CD4-positive, alpha-beta T cell (primary cell): ENCODE measurements at regions of chr3 and their contacts with region 1.

Region 1: DNA sequence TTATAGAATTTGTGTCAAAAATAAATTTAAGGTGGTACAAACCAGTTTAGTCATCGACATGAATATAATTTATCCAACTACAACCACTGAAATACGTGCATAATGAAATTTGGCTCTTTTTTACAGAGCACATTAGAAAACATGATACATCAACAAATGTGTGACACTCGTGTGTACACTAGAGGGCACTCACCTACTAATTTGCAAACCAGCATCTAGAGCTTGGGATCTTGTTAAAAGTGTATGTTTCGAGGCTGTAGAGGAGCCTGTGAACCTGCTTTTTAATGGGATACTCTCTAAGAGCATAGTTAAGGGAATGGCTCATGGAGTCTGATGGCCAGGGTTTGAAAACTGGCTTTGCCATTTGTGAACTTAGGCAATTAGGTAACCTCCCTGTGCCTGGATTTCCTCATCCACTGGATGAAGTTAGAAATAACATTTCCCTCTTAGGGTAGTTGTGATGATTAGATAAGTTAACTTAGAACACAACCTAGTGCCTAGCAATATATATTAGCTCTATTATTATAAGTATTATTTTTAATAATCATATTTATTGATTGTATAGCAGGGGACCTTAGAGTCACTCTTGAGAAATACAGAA is 8.8 kb upstream of the CPOX start:
- DNase-seq: peak in 4 of 14 experiments; percentile 13 to 56 (median 42)
- ATAC-seq: peak; percentile 79
- H3K4me3 ChIP-seq: no peak overlapping the region
- H3K4me3 Mint-ChIP-seq: no peak overlapping the region
- H3K27ac ChIP-seq: no peak overlapping the region
- H3K27ac Mint-ChIP-seq: no peak overlapping the region
- H3K4me1 ChIP-seq: no peaks in the 10 kb centered on the region
- H3K4me1 Mint-ChIP-seq: no peaks in the 10 kb centered on the region
- H3K27me3 ChIP-seq: no peaks in the 10 kb centered on the region
- H3K27me3 Mint-ChIP-seq: peaks cover 13% of the 10 kb centered on the region
- CTCF ChIP-seq: peak; percentile 74

Region 2: DNA sequence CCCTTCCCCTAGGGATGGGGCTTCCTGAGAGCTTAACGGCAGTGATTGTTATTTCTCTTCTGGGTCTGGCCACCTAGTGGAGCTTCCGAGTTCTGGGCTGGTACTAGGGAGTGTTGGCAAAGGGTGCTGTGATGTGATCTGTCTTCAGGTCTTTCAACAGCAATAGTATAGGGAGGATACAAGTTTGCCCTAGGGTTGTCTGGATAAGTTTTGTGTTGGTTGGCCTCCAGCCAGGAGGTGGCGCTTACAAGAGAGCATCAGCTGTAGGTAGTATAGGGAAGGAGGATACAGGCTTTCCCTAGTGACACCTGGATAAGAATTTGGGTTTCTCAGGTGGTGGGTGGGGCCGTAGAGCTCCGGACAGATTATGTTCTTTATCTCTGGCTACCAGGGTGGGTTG is 10.4 kb after region 1 on chr3:
- CTCF ChIA-PET with region 1: interaction called, 12 read pairs
- POLR2A ChIA-PET with region 1: no interaction called
- intact Hi-C with region 1: no loop called
- DNase-seq: peak in 1 of 14 experiments; percentile 10
- ATAC-seq: no peak
- H3K4me3 ChIP-seq: no peak overlapping the region
- H3K4me3 Mint-ChIP-seq: no peak overlapping the region
- H3K27ac ChIP-seq: no peak overlapping the region
- H3K27ac Mint-ChIP-seq: no peak overlapping the region
- H3K4me1 ChIP-seq: no peaks in the 10 kb centered on the region
- H3K4me1 Mint-ChIP-seq: no peaks in the 10 kb centered on the region
- H3K27me3 ChIP-seq: no peaks in the 10 kb centered on the region
- H3K27me3 Mint-ChIP-seq: no peaks in the 10 kb centered on the region
- CTCF ChIP-seq: no peak

Region 3: DNA sequence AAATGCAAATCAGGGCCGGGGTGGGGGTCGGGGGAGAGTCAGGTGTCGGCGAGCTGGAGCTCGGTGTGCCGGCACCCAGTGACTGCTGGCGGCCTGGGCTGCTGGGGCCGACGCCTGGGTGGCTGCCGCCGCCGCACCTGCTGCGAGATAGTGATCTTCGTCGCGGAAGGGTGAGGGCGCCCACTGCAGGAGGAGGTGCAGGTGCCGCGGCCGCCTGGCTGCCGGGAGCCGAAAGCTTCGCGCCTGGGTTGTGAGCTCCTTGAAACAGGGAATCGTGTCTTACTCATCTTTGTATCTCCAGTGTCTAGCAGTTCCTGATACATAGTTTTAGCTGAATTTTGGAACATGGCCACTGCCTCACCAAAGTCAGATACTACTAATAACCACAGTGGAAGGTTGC is 55.3 kb after region 1 on chr3:
- CTCF ChIA-PET with region 1: interaction called, 4 read pairs
- POLR2A ChIA-PET with region 1: no interaction called
- intact Hi-C with region 1: loop called (anchors 5 kb)
- DNase-seq: peak in 12 of 14 experiments; percentile 1 to 63 (median 30)
- ATAC-seq: peak; percentile 81
- H3K4me3 ChIP-seq: no peak overlapping the region
- H3K4me3 Mint-ChIP-seq: no peak overlapping the region
- H3K27ac ChIP-seq: no peak overlapping the region
- H3K27ac Mint-ChIP-seq: no peak overlapping the region
- H3K4me1 ChIP-seq: peaks cover 4% of the 10 kb centered on the region
- H3K4me1 Mint-ChIP-seq: peaks cover 13% of the 10 kb centered on the region
- H3K27me3 ChIP-seq: peaks cover 0 to 4% of the 10 kb centered on the region in 2 experiments
- H3K27me3 Mint-ChIP-seq: peaks cover 22% of the 10 kb centered on the region
- CTCF ChIP-seq: peak; percentile 27

Region 4: DNA sequence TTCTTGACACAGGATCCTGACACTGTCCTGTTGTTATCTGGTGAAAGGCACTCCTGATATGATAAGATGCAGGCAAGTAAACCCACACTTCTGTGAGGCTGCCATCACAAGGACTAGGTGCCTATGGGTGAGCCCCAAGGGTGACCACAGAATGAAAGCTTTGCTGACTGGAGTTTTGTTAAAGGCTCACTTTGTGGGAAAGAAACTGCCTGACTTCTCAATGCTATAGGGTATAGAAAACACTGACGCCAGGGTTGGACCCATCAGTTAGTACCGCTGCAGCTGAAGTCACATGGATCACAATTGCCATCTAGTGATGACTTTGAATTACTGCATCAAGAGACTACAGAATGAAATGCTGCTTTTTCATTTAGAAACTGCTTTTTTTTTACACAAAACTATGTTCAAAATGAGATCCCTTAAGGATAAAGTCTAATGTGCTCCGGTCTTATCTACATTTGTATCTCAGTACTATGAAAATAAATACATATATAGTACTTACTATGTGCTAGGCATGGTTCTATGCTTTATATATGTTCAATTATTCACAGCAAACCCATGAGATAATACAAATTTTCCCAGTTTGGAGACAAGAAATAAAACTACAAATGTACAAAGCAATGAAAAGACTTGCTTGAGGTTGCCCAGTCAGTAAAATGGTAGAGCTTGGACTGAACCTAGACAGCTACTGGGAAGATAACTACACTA is 1151.2 kb after region 1 on chr3:
- CTCF ChIA-PET with region 1: no interaction called
- POLR2A ChIA-PET with region 1: no interaction called
- intact Hi-C with region 1: loop called (anchors 2 to 5 kb)
- DNase-seq: peak in 3 of 14 experiments; percentile 28 to 51 (median 46)
- ATAC-seq: peak; percentile 62
- H3K4me3 ChIP-seq: no peak overlapping the region
- H3K4me3 Mint-ChIP-seq: no peak overlapping the region
- H3K27ac ChIP-seq: no peak overlapping the region
- H3K27ac Mint-ChIP-seq: no peak overlapping the region
- H3K4me1 ChIP-seq: no peaks in the 10 kb centered on the region
- H3K4me1 Mint-ChIP-seq: no peaks in the 10 kb centered on the region
- H3K27me3 ChIP-seq: peaks cover 0 to 5% of the 10 kb centered on the region in 2 experiments
- H3K27me3 Mint-ChIP-seq: peaks cover 22% of the 10 kb centered on the region
- CTCF ChIP-seq: peak; percentile 47